ENCODE measurements at regions of chr21 and their contacts with region 1.

Region 1: DNA sequence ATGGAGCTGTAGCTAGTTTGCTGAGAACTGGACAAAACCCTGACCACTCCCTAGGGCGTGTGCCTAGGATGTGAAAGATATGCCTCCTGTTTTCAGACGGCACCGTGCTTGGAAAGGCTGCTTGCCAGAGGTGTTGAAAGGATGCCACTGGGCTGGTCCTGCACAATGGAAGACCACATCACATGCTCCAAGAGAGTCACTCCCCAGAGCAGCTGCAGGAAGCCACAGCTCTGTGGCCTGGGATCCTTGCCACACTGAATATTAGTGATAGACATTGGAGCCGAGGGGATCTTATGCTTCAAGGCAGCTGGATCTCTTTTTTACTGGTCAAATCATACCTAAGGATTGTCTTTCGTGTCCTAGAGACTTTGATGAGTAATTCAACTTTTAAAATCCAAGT is 6.6 kb upstream of the APP start:
- DNase-seq: no peak
- H3K4me3 ChIP-seq: no peak overlapping the region
- CTCF ChIP-seq: no peak

Region 2: GRCh38 chr21:26188422-26188821 is 11.2 kb after region 1 on chr21:
- CTCF ChIA-PET with region 1: interaction called, 10 read pairs
- POLR2A ChIA-PET with region 1: no interaction called
- DNase-seq: no peak
- H3K4me3 ChIP-seq: no peak overlapping the region
- CTCF ChIP-seq: no peak

Region 3: DNA sequence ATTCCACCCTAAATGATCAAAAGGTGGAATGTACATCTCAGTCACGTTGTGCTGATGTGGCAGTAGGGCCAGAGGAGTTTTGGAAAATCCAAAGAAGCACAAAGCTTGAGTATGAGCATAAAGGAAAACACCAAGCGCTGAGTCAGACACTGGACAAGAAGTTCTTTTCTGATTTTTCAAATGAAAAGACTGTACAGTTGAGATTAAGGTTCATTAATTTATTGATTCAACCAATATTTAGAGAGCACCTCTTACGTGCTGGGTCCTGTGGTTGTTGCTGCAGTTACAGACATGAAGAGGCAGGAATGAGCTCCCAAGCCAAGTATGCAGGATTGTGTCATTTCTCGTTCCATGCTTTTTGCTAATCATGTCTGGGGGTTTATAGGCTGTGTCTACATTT is 22.3 kb after region 1 on chr21:
- CTCF ChIA-PET with region 1: no interaction called
- POLR2A ChIA-PET with region 1: no interaction called
- DNase-seq: peak; percentile 46
- H3K4me3 ChIP-seq: no peak overlapping the region
- CTCF ChIP-seq: no peak

Measured in AG04449 (cell line).